Activated B cell treated with CpG ODN at 0.5 μM for 24 hours (primary cell): ENCODE measurements at regions of chr22 and their contacts with region 1.

Region 1: GRCh38 chr22:39128508-39128907 is 24.0 kb downstream of the CBX7 start:
- DNase-seq: no peak
- ATAC-seq: no peak
- H3K4me3 Mint-ChIP-seq: no peak overlapping the region
- H3K27ac Mint-ChIP-seq: no peak overlapping the region
- H3K4me1 Mint-ChIP-seq: peaks cover 2% of the 10 kb centered on the region
- H3K27me3 Mint-ChIP-seq: no peaks in the 10 kb centered on the region
- CTCF ChIP-seq: no peak

Region 2: DNA sequence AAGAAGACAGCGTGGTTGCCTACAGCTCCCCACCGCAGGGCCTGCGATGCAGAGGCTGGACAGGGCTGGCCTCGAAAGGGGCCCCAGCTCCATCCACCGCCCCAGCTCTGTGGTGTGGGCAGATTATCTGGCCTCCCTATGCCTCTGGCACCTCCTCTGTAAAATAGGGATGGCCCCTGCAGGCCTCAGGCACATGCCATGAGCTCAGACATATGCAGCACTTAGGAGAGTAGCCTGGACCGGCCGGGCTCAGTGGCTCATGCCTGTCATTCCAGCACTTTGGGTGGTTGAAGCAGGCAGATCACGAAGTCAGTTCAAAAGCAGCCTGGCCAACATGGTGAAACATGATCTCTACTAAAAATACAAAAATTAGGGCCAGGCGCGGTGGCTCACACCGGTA is 100.2 kb before region 1 on chr22:
- CTCF ChIA-PET with region 1: no interaction called
- POLR2A ChIA-PET with region 1: interaction called, 10 read pairs
- intact Hi-C with region 1: no loop called
- DNase-seq: no peak
- ATAC-seq: no peak
- H3K4me3 Mint-ChIP-seq: no peak overlapping the region
- H3K27ac Mint-ChIP-seq: peak overlapping the region; percentile 30
- H3K4me1 Mint-ChIP-seq: peaks cover 22% of the 10 kb centered on the region
- H3K27me3 Mint-ChIP-seq: no peaks in the 10 kb centered on the region
- CTCF ChIP-seq: no peak

Region 3: DNA sequence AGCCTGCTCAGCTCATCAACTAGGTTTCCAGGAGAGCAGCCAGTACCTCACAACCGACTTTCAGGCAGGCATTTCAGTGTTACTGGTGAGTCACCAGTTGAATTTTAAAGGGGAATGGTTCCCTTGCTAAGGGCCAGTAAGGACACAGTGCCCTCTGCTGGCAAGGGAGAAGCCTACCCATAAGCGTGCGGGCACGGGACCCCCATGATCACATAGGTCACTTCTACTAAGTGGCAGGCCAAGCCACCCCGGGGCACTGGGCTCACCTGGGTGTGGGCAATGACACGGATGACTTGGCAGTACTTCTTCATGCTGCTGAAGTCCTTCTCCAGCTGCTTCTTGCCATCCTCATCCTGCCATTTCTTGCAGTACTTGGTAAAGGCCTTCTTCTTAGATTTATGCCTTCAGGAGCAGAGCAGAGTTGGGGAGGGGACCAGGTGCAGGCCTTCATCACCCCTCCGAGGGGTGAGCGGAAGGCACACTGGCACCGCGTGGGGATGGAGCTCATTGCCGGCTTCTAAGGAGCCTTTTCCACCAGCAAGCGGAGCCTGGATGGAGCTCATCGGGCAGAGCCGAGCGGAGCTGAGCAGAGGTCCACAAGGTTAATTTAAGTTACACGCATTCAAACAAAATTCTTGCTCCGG is 188.1 kb after region 1 on chr22:
- CTCF ChIA-PET with region 1: no interaction called
- POLR2A ChIA-PET with region 1: no interaction called
- intact Hi-C with region 1: no loop called
- DNase-seq: peak; percentile 56
- ATAC-seq: peak; percentile 12
- H3K4me3 Mint-ChIP-seq: peak overlapping the region; percentile 100
- H3K27ac Mint-ChIP-seq: peak overlapping the region; percentile 53
- H3K4me1 Mint-ChIP-seq: peaks cover 50% of the 10 kb centered on the region
- H3K27me3 Mint-ChIP-seq: no peaks in the 10 kb centered on the region
- CTCF ChIP-seq: peak; percentile 63